Activated CD4-positive, alpha-beta T cell treated with anti-CD3 and anti-CD28 coated beads for 36 hours (primary cell): ENCODE measurements at regions of chr22 and their contacts with region 1.

Region 1: GRCh38 chr22:41780746-41781505 is 19.6 kb upstream of the CCDC134 start:
- DNase-seq: peak; percentile 95
- ATAC-seq: peak; percentile 94
- H3K4me3 Mint-ChIP-seq: peak overlapping the region; percentile 81
- H3K27ac Mint-ChIP-seq: peak overlapping the region; percentile 98
- H3K4me1 Mint-ChIP-seq: peaks cover 39% of the 10 kb centered on the region
- H3K27me3 Mint-ChIP-seq: no peaks in the 10 kb centered on the region

Region 2: GRCh38 chr22:41746567-41747400 is 34.1 kb before region 1 on chr22:
- CTCF ChIA-PET with region 1: interaction called, 12 read pairs
- POLR2A ChIA-PET with region 1: no interaction called
- intact Hi-C with region 1: no loop called
- DNase-seq: peak; percentile 74
- ATAC-seq: peak; percentile 98
- H3K4me3 Mint-ChIP-seq: no peak overlapping the region
- H3K27ac Mint-ChIP-seq: no peak overlapping the region
- H3K4me1 Mint-ChIP-seq: peaks cover 3% of the 10 kb centered on the region
- H3K27me3 Mint-ChIP-seq: peaks cover 6% of the 10 kb centered on the region

Region 3: GRCh38 chr22:41832553-41833368 is 51.8 kb after region 1 on chr22 and contains the start of gene SREBF2:
- CTCF ChIA-PET with region 1: interaction called, 3 read pairs
- POLR2A ChIA-PET with region 1: no interaction called
- intact Hi-C with region 1: loop called in 1 of 2 experiments (anchors 1 kb)
- DNase-seq: peak; percentile 100
- ATAC-seq: peak; percentile 94
- H3K4me3 Mint-ChIP-seq: peak within 1 kb of the TSS; percentile 96
- H3K27ac Mint-ChIP-seq: peak within 1 kb of the TSS; percentile 99
- H3K4me1 Mint-ChIP-seq: peaks cover 45% of the 10 kb centered on the region
- H3K27me3 Mint-ChIP-seq: no peaks in the 10 kb centered on the region
- total RNA-seq, gene SREBF2: 101 to 105 TPM

Region 4: DNA sequence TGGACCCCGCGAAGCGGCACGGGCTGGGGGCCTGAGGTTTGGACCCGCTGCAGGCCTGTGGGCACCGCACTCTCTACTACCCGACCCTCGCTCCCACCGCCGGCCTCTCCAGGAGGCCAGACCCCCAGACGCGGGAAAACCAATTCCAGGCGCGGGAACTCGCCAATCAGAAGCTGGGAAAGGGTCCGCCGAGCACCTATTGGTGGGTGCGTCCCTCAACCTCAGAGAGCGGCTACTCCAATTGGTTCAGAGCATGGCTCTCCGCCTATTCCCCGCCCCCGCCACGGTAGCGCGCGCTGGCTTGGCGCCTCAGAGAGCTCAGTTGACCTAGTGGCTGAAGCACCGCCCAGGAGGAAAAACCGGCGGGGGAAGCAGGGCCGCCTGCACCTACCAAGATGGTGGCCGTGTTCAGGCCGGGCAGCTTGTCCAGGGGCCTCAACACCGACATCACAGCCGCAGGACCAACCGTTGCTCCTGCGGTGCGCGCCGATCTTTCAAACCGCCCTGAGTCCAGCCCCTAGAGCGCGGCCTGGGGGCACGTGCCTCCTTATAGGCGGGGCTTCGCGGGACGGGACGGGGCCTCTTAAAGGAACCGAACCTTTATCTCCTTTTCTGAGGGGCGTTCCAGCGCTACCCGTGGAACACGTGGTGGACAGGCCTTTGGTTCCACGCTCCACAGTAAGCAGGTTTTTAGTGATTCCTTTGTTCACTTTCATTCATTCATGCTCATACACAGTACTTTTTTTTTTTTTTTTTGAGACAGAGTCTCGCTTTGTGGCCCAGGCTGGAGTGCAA is 165.9 kb after region 1 on chr22 and contains the start of gene CENPM:
- CTCF ChIA-PET with region 1: no interaction called
- POLR2A ChIA-PET with region 1: interaction called, 10 read pairs
- intact Hi-C with region 1: loop called in 1 of 2 experiments (anchors 1 kb)
- DNase-seq: peak; percentile 98
- ATAC-seq: peak; percentile 95
- H3K4me3 Mint-ChIP-seq: peak within 1 kb of the TSS; percentile 97
- H3K27ac Mint-ChIP-seq: peak within 1 kb of the TSS; percentile 92
- H3K4me1 Mint-ChIP-seq: peaks cover 59% of the 10 kb centered on the region
- H3K27me3 Mint-ChIP-seq: no peaks in the 10 kb centered on the region
- total RNA-seq, gene CENPM: 65.2 to 82.1 TPM

Region 5: GRCh38 chr22:42151924-42152635 is 371.2 kb after region 1 on chr22:
- CTCF ChIA-PET with region 1: no interaction called
- POLR2A ChIA-PET with region 1: no interaction called
- intact Hi-C with region 1: no loop called
- DNase-seq: no peak
- ATAC-seq: peak; percentile 9
- H3K4me3 Mint-ChIP-seq: no peak overlapping the region
- H3K27ac Mint-ChIP-seq: no peak overlapping the region
- H3K4me1 Mint-ChIP-seq: no peaks in the 10 kb centered on the region
- H3K27me3 Mint-ChIP-seq: no peaks in the 10 kb centered on the region

Region 6: DNA sequence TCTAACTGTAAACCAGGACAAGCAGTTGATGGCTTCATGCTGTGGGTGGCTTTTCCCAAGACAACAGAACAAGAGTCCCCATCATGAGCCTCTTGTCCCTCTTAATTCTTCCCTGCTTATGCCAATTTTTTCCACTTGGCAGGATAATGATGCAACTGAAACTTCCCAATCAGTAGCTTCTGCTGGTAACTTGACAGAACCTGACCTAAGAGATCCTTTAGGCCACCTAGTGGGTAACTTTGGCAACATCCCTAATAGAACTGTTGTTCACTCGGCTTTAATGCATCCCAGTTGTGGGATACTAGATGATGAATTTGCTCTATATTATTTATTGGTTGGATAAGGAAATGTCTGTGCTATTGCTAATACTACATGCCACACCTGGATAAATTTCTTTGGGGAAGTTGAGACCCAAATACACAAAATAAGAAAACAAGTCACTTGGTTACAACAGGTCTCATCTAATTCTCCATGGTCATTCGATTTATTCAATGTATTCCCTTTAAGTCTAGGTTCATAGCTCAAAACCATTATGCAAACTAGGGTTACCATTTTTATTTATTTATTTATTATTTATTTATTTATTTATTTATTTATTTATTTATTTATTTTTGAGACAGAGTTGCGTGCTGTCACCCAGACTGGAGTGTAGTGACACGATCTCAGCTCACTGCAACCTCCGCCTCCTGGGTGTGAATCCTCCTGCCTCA is 692.7 kb after region 1 on chr22:
- CTCF ChIA-PET with region 1: no interaction called
- POLR2A ChIA-PET with region 1: no interaction called
- intact Hi-C with region 1: no loop called
- DNase-seq: no peak
- ATAC-seq: peak; percentile 64
- H3K4me3 Mint-ChIP-seq: no peak overlapping the region
- H3K27ac Mint-ChIP-seq: no peak overlapping the region
- H3K4me1 Mint-ChIP-seq: peaks cover 6% of the 10 kb centered on the region
- H3K27me3 Mint-ChIP-seq: no peaks in the 10 kb centered on the region